IMR-90 (cell line): ENCODE measurements at regions of chr1 and their contacts with region 1.

Region 1: DNA sequence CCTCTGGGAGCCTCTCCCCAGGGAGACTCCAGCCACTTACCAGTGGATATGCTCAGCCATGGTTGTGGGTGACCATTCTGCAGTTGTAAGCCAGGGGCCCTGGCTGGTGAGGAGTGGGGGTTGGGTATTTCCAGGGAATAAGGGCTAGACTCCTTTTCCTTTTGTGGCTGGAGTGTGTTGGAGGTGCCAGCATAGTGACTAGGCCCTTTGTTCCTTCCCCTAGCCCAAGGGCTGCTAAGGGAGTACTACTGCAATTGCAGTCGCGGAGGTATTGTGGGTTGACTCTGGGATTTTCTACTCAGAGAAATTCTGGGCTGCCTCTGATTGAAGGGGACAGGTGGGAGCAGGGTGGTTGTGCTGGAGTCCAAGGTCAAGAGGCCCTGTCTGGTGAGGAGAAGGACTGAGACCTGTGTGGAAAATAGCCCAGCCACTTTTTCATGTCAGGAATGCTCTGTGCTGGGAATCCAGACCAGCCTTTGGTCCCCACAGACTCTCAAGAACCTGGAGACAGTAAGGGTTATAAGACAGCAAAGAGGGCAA is 43.1 kb downstream of the MROH9 start:
- DNase-seq: no peak
- ATAC-seq: no peak
- H3K4me3 ChIP-seq: no peak overlapping the region
- H3K27ac ChIP-seq: no peak overlapping the region
- H3K4me1 ChIP-seq: no peaks in the 10 kb centered on the region
- H3K27me3 ChIP-seq: no peaks in the 10 kb centered on the region
- CTCF ChIP-seq: no peak
- POLR2A ChIP-seq: no peak
- RAD21 ChIP-seq: no peak

Region 2: DNA sequence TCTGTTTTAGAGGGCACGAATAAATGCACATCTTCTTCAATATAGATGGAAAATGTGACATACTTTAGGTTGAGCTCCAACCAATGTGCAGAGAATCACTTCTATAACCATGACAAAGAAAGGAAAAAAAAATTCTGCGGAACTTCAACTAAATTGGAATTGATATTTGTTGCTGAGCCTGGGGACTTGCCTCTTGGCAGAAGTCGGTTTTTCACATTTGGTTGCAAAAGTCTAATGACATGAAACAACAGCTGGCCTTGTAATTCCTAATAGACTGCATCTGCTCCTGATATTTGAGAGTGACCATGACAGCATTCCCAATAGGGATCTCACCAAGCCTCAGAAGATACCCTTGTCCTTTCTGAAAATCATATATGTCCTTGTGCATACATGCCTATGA is 201.7 kb before region 1 on chr1:
- CTCF ChIA-PET with region 1: no interaction called
- POLR2A ChIA-PET with region 1: no interaction called
- dilution Hi-C with region 1: no loop called
- in situ Hi-C with region 1: no loop called
- intact Hi-C with region 1: no loop called
- DNase-seq: no peak
- ATAC-seq: no peak
- H3K4me3 ChIP-seq: no peak overlapping the region
- H3K27ac ChIP-seq: no peak overlapping the region
- H3K4me1 ChIP-seq: no peaks in the 10 kb centered on the region
- H3K27me3 ChIP-seq: no peaks in the 10 kb centered on the region
- CTCF ChIP-seq: no peak
- POLR2A ChIP-seq: no peak
- RAD21 ChIP-seq: no peak

Region 3: DNA sequence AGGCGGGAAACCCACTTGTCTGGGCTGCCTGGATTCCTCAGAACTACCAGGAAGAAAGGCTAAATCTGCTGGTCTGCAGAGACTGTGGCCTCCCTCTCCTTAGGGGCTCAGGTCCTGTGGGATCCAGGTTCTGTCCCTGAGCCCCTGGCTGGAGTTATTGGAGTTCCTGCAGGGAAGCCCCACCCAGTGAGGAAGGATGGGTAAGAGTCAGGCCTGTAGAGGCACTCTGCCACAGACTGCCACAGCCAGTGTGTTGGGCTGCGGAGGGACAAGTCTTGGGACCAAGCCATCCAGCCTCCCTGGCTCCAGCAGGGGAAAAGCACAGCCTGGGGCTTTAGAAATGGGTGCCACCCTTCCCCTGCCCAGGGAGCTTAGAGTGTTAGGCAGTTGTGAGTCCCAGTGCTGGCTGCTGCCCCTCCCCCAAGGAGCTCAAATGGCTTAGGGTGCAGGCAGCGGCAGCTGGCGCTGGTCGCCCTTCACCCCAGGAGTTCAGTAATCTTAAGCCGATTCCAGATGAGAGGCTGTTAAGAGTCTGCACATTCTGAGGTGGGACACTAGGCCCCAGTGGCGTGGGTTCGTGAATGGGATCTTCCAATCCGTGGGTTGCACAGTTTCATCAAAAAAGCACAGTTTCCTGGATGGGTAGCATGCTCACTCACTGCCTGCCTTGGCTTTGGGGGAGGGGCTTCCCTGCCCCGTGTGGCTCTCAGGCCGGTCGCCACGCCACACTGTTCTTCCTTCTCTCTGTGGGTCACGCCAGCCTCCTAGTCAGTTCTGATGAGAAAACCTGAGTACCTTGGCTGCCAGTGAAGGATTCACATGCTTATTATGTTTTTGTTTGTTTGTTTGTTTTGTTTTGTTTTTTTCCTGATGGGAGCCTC is 54.6 kb after region 1 on chr1:
- CTCF ChIA-PET with region 1: no interaction called
- POLR2A ChIA-PET with region 1: no interaction called
- dilution Hi-C with region 1: no loop called
- in situ Hi-C with region 1: no loop called
- intact Hi-C with region 1: no loop called
- DNase-seq: no peak
- ATAC-seq: no peak
- H3K4me3 ChIP-seq: no peak overlapping the region
- H3K27ac ChIP-seq: no peak overlapping the region
- H3K4me1 ChIP-seq: no peaks in the 10 kb centered on the region
- H3K27me3 ChIP-seq: no peaks in the 10 kb centered on the region
- CTCF ChIP-seq: no peak
- POLR2A ChIP-seq: no peak
- RAD21 ChIP-seq: no peak

Region 4: DNA sequence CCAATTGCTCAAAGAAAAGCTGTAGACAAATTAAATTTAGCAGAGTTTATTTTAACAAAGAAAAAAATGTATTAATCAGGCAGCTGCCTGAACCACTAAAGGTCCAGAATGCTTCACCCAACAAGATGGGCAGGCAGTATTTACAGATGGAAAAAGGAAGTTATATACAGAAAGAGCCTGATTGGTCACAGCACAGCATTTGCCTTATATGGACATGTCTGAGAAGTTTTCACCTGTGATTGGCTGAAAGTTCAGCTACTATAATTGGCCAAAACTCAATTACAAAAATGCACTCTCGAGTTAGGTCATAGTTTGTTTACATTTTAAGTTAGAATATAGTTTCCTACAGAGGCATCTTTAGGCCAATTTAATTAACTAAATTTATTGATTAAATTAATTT is 254.7 kb after region 1 on chr1:
- CTCF ChIA-PET with region 1: no interaction called
- POLR2A ChIA-PET with region 1: no interaction called
- dilution Hi-C with region 1: no loop called
- in situ Hi-C with region 1: loop called (anchors 10 kb)
- intact Hi-C with region 1: no loop called
- DNase-seq: no peak
- ATAC-seq: no peak
- H3K4me3 ChIP-seq: no peak overlapping the region
- H3K27ac ChIP-seq: no peak overlapping the region
- H3K4me1 ChIP-seq: no peaks in the 10 kb centered on the region
- H3K27me3 ChIP-seq: no peaks in the 10 kb centered on the region
- CTCF ChIP-seq: no peak
- POLR2A ChIP-seq: no peak
- RAD21 ChIP-seq: no peak